Endothelial cell of umbilical vein (primary cell): ENCODE measurements at regions of chr4 and their contacts with region 1.

Region 1: DNA sequence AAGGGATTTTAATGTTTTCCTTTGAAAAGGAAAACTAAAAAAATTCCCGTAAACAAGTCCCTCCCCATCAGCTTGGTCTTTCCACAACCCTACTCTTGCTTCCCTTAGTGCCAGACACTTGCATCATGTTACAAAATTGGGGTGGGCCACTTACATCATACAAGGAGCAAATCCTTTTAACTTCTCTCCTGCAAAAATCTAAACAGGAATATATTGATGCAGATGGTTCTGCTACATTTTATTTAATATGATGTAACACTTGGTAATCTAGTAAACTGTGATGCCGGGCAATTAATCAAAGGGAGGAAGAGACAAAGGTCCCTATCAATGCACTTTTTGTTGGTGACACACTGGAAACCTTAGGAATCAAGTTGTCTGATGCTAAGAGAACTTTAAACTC is 125.3 kb downstream of the UBE2K start:
- DNase-seq: no peak
- H3K4me3 ChIP-seq: no peak overlapping the region
- H3K27ac ChIP-seq: no peak overlapping the region
- H3K4me1 ChIP-seq: peaks cover 20% of the 10 kb centered on the region
- H3K27me3 ChIP-seq: no peaks in the 10 kb centered on the region
- CTCF ChIP-seq: no peak
- POLR2A ChIP-seq: no peak

Region 2: DNA sequence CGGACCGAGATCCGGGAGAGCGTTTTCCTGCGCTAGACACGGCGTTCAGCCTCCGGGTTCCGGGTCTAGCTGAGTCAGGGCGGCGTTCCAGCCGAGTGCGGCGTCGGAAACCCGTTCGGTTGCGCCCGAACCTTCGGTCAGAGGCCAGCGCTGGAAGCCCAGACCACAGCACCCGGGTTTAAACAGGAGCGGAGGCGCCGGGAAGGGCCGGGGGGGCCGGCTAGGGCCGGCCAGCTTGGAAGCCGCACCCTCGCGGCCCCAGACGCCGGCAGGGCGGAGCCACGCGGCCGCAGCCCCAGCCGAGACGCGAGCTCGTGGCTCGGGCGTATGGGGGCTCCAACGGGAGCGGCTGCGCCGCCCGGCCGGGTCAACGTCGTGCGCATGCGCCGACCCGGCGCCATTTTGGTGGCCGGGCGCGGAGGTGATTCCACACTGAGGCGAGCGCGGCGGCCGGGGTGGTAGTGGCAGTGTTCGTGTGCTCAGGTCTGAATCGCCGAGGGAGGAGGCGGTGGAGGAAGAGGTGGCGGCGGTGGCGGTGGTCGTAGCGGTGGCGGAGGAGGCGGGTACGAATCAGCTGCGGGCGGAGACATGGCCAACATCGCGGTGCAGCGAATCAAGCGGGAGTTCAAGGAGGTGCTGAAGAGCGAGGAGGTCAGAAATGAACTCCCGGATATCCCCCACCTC is 125.3 kb before region 1 on chr4 and contains the start of gene UBE2K:
- CTCF ChIA-PET with region 1: no interaction called
- POLR2A ChIA-PET with region 1: no interaction called
- dilution Hi-C with region 1: no loop called
- intact Hi-C with region 1: loop called (anchors 2 kb)
- DNase-seq: peak; percentile 81
- H3K4me3 ChIP-seq: peak within 1 kb of the TSS; percentile 39 to 97 (median 90)
- H3K27ac ChIP-seq: peak within 1 kb of the TSS; percentile 80
- H3K4me1 ChIP-seq: peaks cover 21% of the 10 kb centered on the region
- H3K27me3 ChIP-seq: no peaks in the 10 kb centered on the region
- CTCF ChIP-seq: no peak
- POLR2A ChIP-seq: peak; percentile 84
- total RNA-seq, gene UBE2K: 90.3 and 97.8 TPM in 2 replicates

Region 3: DNA sequence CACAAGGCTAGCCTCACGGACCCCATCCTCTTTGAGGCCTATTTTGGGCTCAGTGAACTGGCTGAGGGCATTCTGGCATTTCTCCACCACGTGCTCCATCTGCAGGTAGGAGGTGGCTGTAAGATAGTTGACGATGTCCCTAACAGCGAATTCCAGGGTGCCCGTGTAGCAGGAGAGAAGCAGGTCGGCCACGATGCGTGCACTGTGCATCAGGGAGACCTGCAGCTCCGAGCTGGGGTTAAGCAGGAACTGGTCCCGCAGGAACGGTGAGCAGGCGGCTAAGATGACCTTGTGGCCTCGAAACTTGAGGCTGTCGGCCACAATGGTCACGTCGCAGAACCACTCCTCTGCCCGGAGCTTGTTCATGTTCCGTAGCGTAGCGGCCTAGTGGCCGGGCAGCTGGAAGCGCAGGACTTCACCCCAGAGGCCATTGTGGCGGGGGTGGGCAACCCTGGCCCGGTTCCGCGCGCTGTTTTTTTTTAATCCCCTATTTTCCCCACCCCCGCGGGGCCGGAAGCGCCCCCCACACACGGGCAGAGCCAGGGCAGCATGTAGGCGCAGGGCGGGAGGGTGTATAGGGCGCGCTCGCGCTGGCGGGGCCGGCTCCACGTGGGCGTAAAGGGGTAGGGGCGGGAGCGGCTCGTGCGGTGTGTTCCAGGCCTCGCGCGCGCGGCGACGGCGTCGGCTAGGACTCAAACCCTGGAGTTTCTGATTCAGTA is 52.0 kb before region 1 on chr4:
- CTCF ChIA-PET with region 1: no interaction called
- POLR2A ChIA-PET with region 1: no interaction called
- dilution Hi-C with region 1: no loop called
- intact Hi-C with region 1: loop called (anchors 5 kb)
- DNase-seq: no peak
- H3K4me3 ChIP-seq: no peak overlapping the region
- H3K27ac ChIP-seq: no peak overlapping the region
- H3K4me1 ChIP-seq: no peaks in the 10 kb centered on the region
- H3K27me3 ChIP-seq: no peaks in the 10 kb centered on the region
- CTCF ChIP-seq: no peak
- POLR2A ChIP-seq: no peak

Region 4: GRCh38 chr4:39977489-39978377 is 154.5 kb after region 1 on chr4 and contains the start of gene PDS5A:
- CTCF ChIA-PET with region 1: no interaction called
- POLR2A ChIA-PET with region 1: no interaction called
- dilution Hi-C with region 1: no loop called
- intact Hi-C with region 1: loop called (anchors 2 kb)
- DNase-seq: peak; percentile 88
- H3K4me3 ChIP-seq: peak within 1 kb of the TSS; percentile 62 to 83 (median 67)
- H3K27ac ChIP-seq: peak within 1 kb of the TSS; percentile 74
- H3K4me1 ChIP-seq: peaks cover 15% of the 10 kb centered on the region
- H3K27me3 ChIP-seq: no peaks in the 10 kb centered on the region
- CTCF ChIP-seq: peak; percentile 77 to 95
- POLR2A ChIP-seq: peak; percentile 78
- total RNA-seq, gene PDS5A: 77.8 and 80.8 TPM in 2 replicates